ENCODE measurements at regions of chr19 and their contacts with region 1.

Region 1: DNA sequence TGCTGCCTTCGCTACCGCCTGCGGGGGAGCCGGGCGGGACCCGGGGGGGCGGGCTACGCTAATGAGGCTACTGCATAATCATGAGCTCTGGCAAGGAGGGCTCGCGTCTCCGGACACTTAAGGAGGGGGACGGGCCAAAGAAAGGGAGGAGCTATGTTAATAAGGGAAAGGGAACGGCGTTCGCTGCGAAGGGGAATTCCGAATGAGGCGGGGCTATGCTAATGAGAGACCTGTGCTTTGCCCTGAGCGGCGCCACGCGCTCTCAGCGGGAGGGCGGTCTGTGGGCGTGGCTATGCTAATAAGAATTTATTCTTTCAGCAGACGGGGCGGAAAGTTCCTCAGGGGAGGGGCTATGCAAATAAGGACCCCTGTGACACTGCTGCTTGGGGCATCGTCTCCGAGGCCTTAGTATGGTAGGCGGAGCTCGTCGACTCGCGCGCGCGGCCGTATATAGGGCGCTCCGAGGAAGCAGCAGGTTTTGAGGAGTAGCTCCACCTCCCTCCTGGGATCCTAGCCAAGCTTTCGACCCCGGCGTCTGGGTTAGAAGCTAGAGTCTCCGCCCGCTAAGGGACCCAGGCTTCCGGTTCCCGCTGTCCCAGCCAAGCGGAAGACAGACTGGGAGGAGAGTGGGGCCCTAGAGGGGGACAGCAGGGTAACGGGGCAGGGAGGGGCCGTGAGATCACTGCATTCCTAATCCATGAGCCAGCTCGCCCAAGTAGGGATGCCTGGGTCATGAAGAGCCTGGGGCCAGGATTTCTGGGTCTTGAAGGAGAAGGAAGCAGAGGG is at the start of gene RRAS:
- DNase-seq: peak; percentile 91 to 100 (median 99)
- ATAC-seq: peak; percentile 78
- H3K4me3 ChIP-seq: peak within 1 kb of the TSS; percentile 64
- H3K4me3 Mint-ChIP-seq: peak within 1 kb of the TSS; percentile 86 to 98 (median 93)
- H3K27ac ChIP-seq: peak within 1 kb of the TSS; percentile 95
- H3K27ac Mint-ChIP-seq: peak within 1 kb of the TSS; percentile 93 to 99 (median 99)
- H3K4me1 ChIP-seq: peaks cover 27 to 40% of the 10 kb centered on the region in 2 donors
- H3K4me1 Mint-ChIP-seq: peaks cover 57 to 67% (median 63%) of the 10 kb centered on the region in 7 donors
- H3K27me3 ChIP-seq: no peaks in the 10 kb centered on the region
- H3K27me3 Mint-ChIP-seq: peaks cover 0 to 6% (median 0%) of the 10 kb centered on the region in 5 donors
- total RNA-seq, gene RRAS: 11.0 to 18.6 (median 13.8) TPM

Region 2: GRCh38 chr19:48513289-48514122 is 1126.8 kb before region 1 on chr19:
- CTCF ChIA-PET with region 1: no interaction called
- POLR2A ChIA-PET with region 1: no interaction called
- intact Hi-C with region 1: loop called in 1 of 2 experiments (anchors 2 kb)
- DNase-seq: peak in 8 of 9 donors; percentile 69 to 84 (median 78)
- ATAC-seq: peak; percentile 77
- H3K4me3 ChIP-seq: peak overlapping the region; percentile 72
- H3K4me3 Mint-ChIP-seq: no peak overlapping the region
- H3K27ac ChIP-seq: peak overlapping the region; percentile 82
- H3K27ac Mint-ChIP-seq: peak overlapping the region in 3 of 9 donors; percentile 68 to 91 (median 90)
- H3K4me1 ChIP-seq: peaks cover 21 to 22% of the 10 kb centered on the region in 2 donors
- H3K4me1 Mint-ChIP-seq: peaks cover 11 to 18% (median 13%) of the 10 kb centered on the region in 7 donors
- H3K27me3 ChIP-seq: no peaks in the 10 kb centered on the region
- H3K27me3 Mint-ChIP-seq: no peaks in the 10 kb centered on the region

Region 3: DNA sequence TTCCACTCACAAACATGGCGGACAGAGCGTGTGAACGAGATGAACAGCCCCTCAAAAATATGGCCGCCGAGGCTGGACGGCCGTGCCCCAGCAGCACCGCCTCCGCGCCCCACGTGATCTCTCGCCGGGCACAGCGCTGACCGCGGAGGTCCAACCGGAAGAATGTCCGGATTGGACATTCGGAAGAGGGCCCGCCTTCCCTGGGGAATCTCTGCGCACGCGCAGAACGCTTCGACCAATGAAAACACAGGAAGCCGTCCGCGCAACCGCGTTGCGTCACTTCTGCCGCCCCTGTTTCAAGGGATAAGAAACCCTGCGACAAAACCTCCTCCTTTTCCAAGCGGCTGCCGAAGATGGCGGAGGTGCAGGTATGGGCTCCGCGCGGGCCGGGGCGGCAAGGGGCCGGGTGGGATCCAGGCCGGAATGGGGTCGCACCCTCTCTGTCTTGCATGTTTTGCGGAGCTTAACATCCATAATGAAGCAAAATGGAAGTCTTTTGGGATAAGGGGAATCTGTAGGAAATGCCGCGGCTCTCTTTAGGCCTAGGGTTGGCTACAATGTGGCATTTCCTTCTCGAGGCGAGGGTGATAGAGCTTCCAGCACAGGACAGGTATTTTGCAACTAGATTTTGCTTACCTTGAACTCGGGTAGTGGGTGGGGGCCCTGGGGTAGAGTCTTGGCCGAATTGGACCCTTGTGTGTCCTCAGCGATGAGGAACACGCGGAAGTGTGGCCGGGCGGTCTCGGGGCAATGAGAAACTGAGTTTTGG is 152.8 kb before region 1 on chr19 and contains the start of gene RPL13A:
- CTCF ChIA-PET with region 1: no interaction called
- POLR2A ChIA-PET with region 1: interaction called, 7 read pairs
- intact Hi-C with region 1: loop called (anchors 1 kb)
- DNase-seq: peak; percentile 97 to 99 (median 99)
- ATAC-seq: peak; percentile 94
- H3K4me3 ChIP-seq: peak within 1 kb of the TSS; percentile 100
- H3K4me3 Mint-ChIP-seq: peak within 1 kb of the TSS; percentile 95 to 99 (median 98)
- H3K27ac ChIP-seq: peak within 1 kb of the TSS; percentile 92
- H3K27ac Mint-ChIP-seq: peak within 1 kb of the TSS; percentile 89 to 99 (median 96)
- H3K4me1 ChIP-seq: peaks cover 19 to 26% of the 10 kb centered on the region in 2 donors
- H3K4me1 Mint-ChIP-seq: peaks cover 27 to 52% (median 42%) of the 10 kb centered on the region in 7 donors
- H3K27me3 ChIP-seq: no peaks in the 10 kb centered on the region
- H3K27me3 Mint-ChIP-seq: peaks cover 0 to 9% (median 0%) of the 10 kb centered on the region in 5 donors
- total RNA-seq, gene RPL13A: 2,467 to 6,044 (median 5,762) TPM

Region 4: GRCh38 chr19:49590071-49590970 is 50.0 kb before region 1 on chr19:
- CTCF ChIA-PET with region 1: interaction called, 7 read pairs
- POLR2A ChIA-PET with region 1: interaction called, 62 read pairs
- intact Hi-C with region 1: loop called (anchors 1 kb)
- DNase-seq: peak; percentile 85 to 98 (median 97)
- ATAC-seq: peak; percentile 90
- H3K4me3 ChIP-seq: peak overlapping the region; percentile 97
- H3K4me3 Mint-ChIP-seq: peak overlapping the region; percentile 85 to 95 (median 94)
- H3K27ac ChIP-seq: peak overlapping the region; percentile 86
- H3K27ac Mint-ChIP-seq: peak overlapping the region; percentile 76 to 95 (median 93)
- H3K4me1 ChIP-seq: peaks cover 15 to 18% of the 10 kb centered on the region in 2 donors
- H3K4me1 Mint-ChIP-seq: peaks cover 26 to 42% (median 31%) of the 10 kb centered on the region in 7 donors
- H3K27me3 ChIP-seq: no peaks in the 10 kb centered on the region
- H3K27me3 Mint-ChIP-seq: peaks cover 0 to 12% (median 0%) of the 10 kb centered on the region in 5 donors

Region 5: GRCh38 chr19:49808711-49809159 is 168.4 kb after region 1 on chr19:
- CTCF ChIA-PET with region 1: no interaction called
- POLR2A ChIA-PET with region 1: no interaction called
- intact Hi-C with region 1: loop called (anchors 2 kb)
- DNase-seq: peak; percentile 69 to 92 (median 83)
- ATAC-seq: peak; percentile 76
- H3K4me3 ChIP-seq: peak overlapping the region; percentile 71
- H3K4me3 Mint-ChIP-seq: peak overlapping the region; percentile 85 to 96 (median 90)
- H3K27ac ChIP-seq: peak overlapping the region; percentile 73
- H3K27ac Mint-ChIP-seq: peak overlapping the region; percentile 66 to 94 (median 84)
- H3K4me1 ChIP-seq: peaks cover 11 to 16% of the 10 kb centered on the region in 2 donors
- H3K4me1 Mint-ChIP-seq: peaks cover 20 to 39% (median 28%) of the 10 kb centered on the region in 7 donors
- H3K27me3 ChIP-seq: no peaks in the 10 kb centered on the region
- H3K27me3 Mint-ChIP-seq: no peaks in the 10 kb centered on the region

Region 6: DNA sequence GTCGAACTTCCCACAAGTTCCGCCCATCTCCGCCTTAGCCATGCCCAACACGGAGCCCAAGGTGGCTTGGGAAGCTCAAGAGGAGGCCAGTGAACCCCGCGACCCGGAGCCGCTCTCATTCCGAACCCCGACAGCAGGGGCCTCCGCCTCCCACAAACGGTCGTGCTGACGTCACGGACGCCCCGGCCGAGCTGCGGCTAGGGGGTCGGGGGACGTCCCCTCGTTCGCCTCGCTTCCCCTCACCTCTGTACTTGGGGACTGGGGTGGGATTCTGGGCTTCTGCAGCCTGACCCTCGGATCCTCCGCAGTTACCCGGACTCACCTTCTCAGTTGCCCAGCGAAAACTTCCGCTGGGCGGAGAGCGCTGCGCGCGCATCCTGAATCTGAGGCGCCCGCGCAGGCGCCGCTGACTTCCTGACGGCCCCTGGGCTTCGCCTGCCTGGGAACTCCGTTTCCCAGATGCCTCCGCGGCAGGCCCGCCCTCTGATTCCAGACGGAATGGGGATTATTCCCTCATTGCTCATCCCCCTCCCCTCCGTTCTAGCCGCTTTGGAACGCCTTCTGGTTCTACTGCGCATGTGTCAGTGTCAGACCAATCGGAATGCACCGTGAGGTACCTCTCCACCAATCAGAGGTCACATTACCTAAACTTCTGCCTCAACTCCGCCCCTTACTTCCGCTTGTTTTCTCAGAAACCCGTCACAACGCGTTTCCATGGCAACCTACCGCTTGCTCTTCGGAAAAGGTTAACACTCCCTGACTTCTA is 384.9 kb after region 1 on chr19 and contains the start of gene VRK3:
- CTCF ChIA-PET with region 1: no interaction called
- POLR2A ChIA-PET with region 1: no interaction called
- intact Hi-C with region 1: loop called in 1 of 2 experiments (anchors 1 kb)
- DNase-seq: peak; percentile 93 to 100 (median 99)
- ATAC-seq: peak; percentile 91
- H3K4me3 ChIP-seq: peak within 1 kb of the TSS; percentile 85
- H3K4me3 Mint-ChIP-seq: peak within 1 kb of the TSS; percentile 93 to 99 (median 94)
- H3K27ac ChIP-seq: peak within 1 kb of the TSS; percentile 96
- H3K27ac Mint-ChIP-seq: peak within 1 kb of the TSS; percentile 98 to 100 (median 99)
- H3K4me1 ChIP-seq: peaks cover 19 to 29% of the 10 kb centered on the region in 2 donors
- H3K4me1 Mint-ChIP-seq: peaks cover 30 to 73% (median 58%) of the 10 kb centered on the region in 7 donors
- H3K27me3 ChIP-seq: no peaks in the 10 kb centered on the region
- H3K27me3 Mint-ChIP-seq: peaks cover 0 to 6% (median 0%) of the 10 kb centered on the region in 5 donors
- total RNA-seq, gene VRK3: 70.6 to 121 (median 84.7) TPM

Region 7: GRCh38 chr19:50039968-50040367 is 399.7 kb after region 1 on chr19:
- CTCF ChIA-PET with region 1: no interaction called
- POLR2A ChIA-PET with region 1: no interaction called
- intact Hi-C with region 1: no loop called
- DNase-seq: no peak
- ATAC-seq: no peak
- H3K4me3 ChIP-seq: no peak overlapping the region
- H3K4me3 Mint-ChIP-seq: no peak overlapping the region
- H3K27ac ChIP-seq: no peak overlapping the region
- H3K27ac Mint-ChIP-seq: no peak overlapping the region
- H3K4me1 ChIP-seq: no peaks in the 10 kb centered on the region
- H3K4me1 Mint-ChIP-seq: peaks cover 0 to 13% (median 3%) of the 10 kb centered on the region in 7 donors
- H3K27me3 ChIP-seq: no peaks in the 10 kb centered on the region
- H3K27me3 Mint-ChIP-seq: no peaks in the 10 kb centered on the region

Measured in naive thymus-derived CD4-positive, alpha-beta T cell (primary cell).